K562 (cell line): ENCODE measurements at regions of chr1 and their contacts with region 1.

Region 1: DNA sequence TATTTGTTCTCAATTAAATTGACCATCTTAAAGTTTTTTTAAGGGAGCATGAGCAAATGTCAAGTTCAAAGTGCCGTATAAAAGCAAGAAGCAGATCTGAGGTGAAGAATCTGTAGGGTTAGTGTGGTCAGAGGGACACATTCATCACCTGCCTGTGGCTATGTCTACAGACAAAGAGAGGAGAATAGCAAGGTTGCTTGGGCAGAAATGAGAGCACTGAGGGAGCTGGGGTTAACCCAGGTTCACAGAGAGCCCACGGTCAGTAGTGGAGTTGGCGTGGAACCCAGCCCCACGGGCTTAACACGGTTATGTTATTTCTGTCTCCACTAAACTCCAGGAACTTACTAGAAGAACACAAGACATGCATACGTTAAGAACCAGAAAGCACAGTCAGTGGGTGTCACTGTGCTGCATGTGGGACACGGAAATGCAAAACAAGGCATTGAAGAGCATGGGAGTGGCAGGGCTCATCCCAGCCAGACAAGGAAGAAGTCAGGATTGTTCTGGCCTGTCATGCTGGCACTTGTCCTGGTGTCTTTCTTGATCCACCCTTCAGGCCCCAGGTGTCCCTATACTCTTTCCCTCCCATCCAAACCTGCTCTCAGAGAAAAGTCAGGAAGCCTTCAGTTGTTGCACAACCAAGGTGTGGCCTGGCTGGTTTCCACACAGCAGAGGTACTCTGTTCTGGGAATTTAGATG is 95.5 kb upstream of the IVNS1ABP start:
- DNase-seq: no peak
- ATAC-seq: peak; percentile 49
- H3K4me3 ChIP-seq: no peak overlapping the region
- H3K27ac ChIP-seq: no peak overlapping the region
- H3K4me1 ChIP-seq: no peaks in the 10 kb centered on the region
- H3K27me3 ChIP-seq: peaks cover 2 to 7% of the 10 kb centered on the region in 2 experiments; a peak in 4 of 5 replicates
- CTCF ChIP-seq: no peak
- EP300 ChIP-seq: no peak
- POLR2A ChIP-seq: no peak
- RAD21 ChIP-seq: no peak

Region 2: GRCh38 chr1:185426848-185427247 is 14.3 kb after region 1 on chr1:
- CTCF ChIA-PET with region 1: no interaction called
- POLR2A ChIA-PET with region 1: interaction called, 10 read pairs
- in situ Hi-C with region 1: no loop called
- intact Hi-C with region 1: no loop called
- DNase-seq: no peak
- ATAC-seq: no peak; the same call in 2 of the 3 replicates
- H3K4me3 ChIP-seq: no peak overlapping the region
- H3K27ac ChIP-seq: no peak overlapping the region
- H3K4me1 ChIP-seq: no peaks in the 10 kb centered on the region
- H3K27me3 ChIP-seq: peaks cover 7 to 9% of the 10 kb centered on the region in 2 experiments
- CTCF ChIP-seq: no peak
- EP300 ChIP-seq: no peak
- POLR2A ChIP-seq: no peak
- RAD21 ChIP-seq: no peak